Activated CD4-positive, alpha-beta T cell treated with anti-CD3 and anti-CD28 coated beads, Interleukin-2, amount 10 ng/mL, durations not matched to agents 24 days and 14 days (primary cell): ENCODE measurements at regions of chr6 and their contacts with region 1.

Region 1: GRCh38 chr6:111888928-111889695 is 15.9 kb upstream of the FYN start:
- DNase-seq: no peak
- H3K4me3 Mint-ChIP-seq: no peak overlapping the region
- H3K27ac Mint-ChIP-seq: no peak overlapping the region
- H3K4me1 Mint-ChIP-seq: no peaks in the 10 kb centered on the region
- H3K27me3 Mint-ChIP-seq: peaks cover 22% of the 10 kb centered on the region

Region 2: GRCh38 chr6:111799576-111800258 is 89.4 kb before region 1 on chr6:
- intact Hi-C with region 1: no loop called
- DNase-seq: no peak
- H3K4me3 Mint-ChIP-seq: no peak overlapping the region
- H3K27ac Mint-ChIP-seq: peak overlapping the region; percentile 76
- H3K4me1 Mint-ChIP-seq: peaks cover 76% of the 10 kb centered on the region
- H3K27me3 Mint-ChIP-seq: no peaks in the 10 kb centered on the region

Region 3: GRCh38 chr6:111925296-111925695 is 36.2 kb after region 1 on chr6:
- intact Hi-C with region 1: loop called (anchors 5 kb)
- DNase-seq: no peak
- H3K4me3 Mint-ChIP-seq: no peak overlapping the region
- H3K27ac Mint-ChIP-seq: no peak overlapping the region
- H3K4me1 Mint-ChIP-seq: peaks cover 11% of the 10 kb centered on the region
- H3K27me3 Mint-ChIP-seq: no peaks in the 10 kb centered on the region

Region 4: DNA sequence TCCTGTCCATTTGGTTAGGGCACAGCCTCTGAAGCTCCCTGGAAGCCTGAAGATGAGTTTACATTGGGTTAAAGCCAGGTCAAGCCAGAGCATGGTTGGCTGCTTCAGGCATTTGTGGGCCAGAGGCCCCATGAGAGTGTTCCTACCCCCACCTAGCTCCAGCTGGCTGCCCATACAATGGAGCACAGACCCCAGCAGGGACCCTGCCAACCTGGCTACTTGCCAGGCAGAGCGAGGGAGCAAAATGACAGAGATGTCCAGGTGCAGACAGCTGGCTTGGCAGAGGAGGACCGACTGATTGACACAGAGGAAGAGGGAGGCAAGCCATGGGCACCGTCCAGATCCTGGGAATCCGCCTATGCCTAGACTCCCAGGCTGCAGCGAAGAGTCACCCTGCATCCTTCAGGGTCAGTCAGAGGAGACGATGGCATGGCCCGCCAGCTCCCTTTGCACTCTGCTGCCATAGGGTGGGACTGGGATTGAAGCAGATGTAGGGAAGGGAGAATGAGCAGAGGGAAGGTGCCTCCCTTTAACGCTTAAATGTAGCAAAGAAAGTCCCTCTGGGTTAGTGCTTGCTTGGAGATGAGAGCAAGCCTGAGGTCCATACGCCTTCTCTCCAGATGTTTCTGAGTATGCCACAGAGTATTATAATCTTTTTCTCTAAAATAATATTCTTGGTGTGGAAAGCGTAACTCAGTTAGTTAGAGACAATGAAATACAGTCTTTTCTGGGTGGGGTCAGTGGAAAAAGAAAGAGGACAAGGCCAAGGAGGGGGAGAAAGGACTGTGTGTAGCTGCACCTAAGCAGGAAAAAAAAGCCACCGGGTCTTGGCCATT is 61.8 kb after region 1 on chr6:
- intact Hi-C with region 1: loop called (anchors 5 kb)
- DNase-seq: no peak
- H3K4me3 Mint-ChIP-seq: no peak overlapping the region
- H3K27ac Mint-ChIP-seq: no peak overlapping the region
- H3K4me1 Mint-ChIP-seq: peaks cover 9% of the 10 kb centered on the region
- H3K27me3 Mint-ChIP-seq: peaks cover 27% of the 10 kb centered on the region